Naive thymus-derived CD4-positive, alpha-beta T cell (primary cell): ENCODE measurements at regions of chr9 and their contacts with region 1.

Region 1: DNA sequence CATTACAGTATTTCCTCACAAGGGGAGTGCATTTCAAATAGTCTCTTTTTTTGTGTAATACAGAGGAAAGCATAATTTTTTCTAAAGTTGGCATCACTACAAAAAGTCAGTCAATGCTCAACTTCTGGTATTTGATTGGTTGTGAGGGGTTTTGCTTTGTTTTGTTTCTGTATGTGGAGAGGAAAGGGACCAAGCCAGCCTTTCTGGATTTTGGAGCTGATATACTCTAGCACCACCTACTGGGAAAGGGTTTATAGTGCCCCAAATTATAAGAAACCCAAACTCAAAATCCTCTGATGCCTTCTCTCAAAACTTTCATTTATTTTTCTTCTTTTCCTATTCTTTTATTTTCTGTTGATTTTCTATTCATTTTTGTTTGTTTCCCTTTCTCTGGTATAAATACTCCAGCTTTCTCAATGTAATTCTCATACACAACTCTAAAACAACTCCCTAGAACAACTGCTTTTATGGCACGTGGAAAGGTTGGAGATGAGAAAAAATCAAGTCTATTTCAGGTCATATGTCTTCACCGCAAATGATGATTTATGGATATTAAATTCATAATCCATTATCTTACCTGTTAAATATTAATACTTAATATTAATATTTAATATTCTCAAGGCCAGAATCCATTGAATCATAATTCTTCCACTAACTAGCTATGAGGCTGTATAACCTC is 69.5 kb upstream of the ANXA1 start:
- DNase-seq: peak in 4 of 9 donors; percentile 8 to 20 (median 15)
- ATAC-seq: peak; percentile 57
- H3K4me3 ChIP-seq: no peak overlapping the region
- H3K4me3 Mint-ChIP-seq: no peak overlapping the region
- H3K27ac ChIP-seq: no peak overlapping the region
- H3K27ac Mint-ChIP-seq: no peak overlapping the region
- H3K4me1 ChIP-seq: no peaks in the 10 kb centered on the region
- H3K4me1 Mint-ChIP-seq: no peaks in the 10 kb centered on the region
- H3K27me3 ChIP-seq: no peaks in the 10 kb centered on the region
- H3K27me3 Mint-ChIP-seq: peaks cover 8 to 31% (median 18%) of the 10 kb centered on the region in 5 donors

Region 2: GRCh38 chr9:72038890-72039410 is 1043.2 kb before region 1 on chr9:
- CTCF ChIA-PET with region 1: no interaction called
- POLR2A ChIA-PET with region 1: no interaction called
- intact Hi-C with region 1: loop called in 1 of 2 experiments (anchors 1 kb)
- DNase-seq: peak; percentile 15 to 59 (median 41)
- ATAC-seq: peak; percentile 76
- H3K4me3 ChIP-seq: no peak overlapping the region
- H3K4me3 Mint-ChIP-seq: peak overlapping the region in 1 of 10 donors; percentile 66
- H3K27ac ChIP-seq: no peak overlapping the region
- H3K27ac Mint-ChIP-seq: no peak overlapping the region
- H3K4me1 ChIP-seq: peaks cover 0 to 3% of the 10 kb centered on the region in 2 donors
- H3K4me1 Mint-ChIP-seq: peaks cover 0 to 7% (median 4%) of the 10 kb centered on the region in 7 donors
- H3K27me3 ChIP-seq: no peaks in the 10 kb centered on the region
- H3K27me3 Mint-ChIP-seq: peaks cover 4 to 22% (median 6%) of the 10 kb centered on the region in 5 donors

Region 3: GRCh38 chr9:72834994-72835393 is 247.1 kb before region 1 on chr9:
- CTCF ChIA-PET with region 1: no interaction called
- POLR2A ChIA-PET with region 1: no interaction called
- intact Hi-C with region 1: no loop called
- DNase-seq: no peak
- ATAC-seq: no peak
- H3K4me3 ChIP-seq: no peak overlapping the region
- H3K4me3 Mint-ChIP-seq: no peak overlapping the region
- H3K27ac ChIP-seq: no peak overlapping the region
- H3K27ac Mint-ChIP-seq: no peak overlapping the region
- H3K4me1 ChIP-seq: no peaks in the 10 kb centered on the region
- H3K4me1 Mint-ChIP-seq: no peaks in the 10 kb centered on the region
- H3K27me3 ChIP-seq: no peaks in the 10 kb centered on the region
- H3K27me3 Mint-ChIP-seq: peaks cover 0 to 16% (median 15%) of the 10 kb centered on the region in 5 donors

Region 4: DNA sequence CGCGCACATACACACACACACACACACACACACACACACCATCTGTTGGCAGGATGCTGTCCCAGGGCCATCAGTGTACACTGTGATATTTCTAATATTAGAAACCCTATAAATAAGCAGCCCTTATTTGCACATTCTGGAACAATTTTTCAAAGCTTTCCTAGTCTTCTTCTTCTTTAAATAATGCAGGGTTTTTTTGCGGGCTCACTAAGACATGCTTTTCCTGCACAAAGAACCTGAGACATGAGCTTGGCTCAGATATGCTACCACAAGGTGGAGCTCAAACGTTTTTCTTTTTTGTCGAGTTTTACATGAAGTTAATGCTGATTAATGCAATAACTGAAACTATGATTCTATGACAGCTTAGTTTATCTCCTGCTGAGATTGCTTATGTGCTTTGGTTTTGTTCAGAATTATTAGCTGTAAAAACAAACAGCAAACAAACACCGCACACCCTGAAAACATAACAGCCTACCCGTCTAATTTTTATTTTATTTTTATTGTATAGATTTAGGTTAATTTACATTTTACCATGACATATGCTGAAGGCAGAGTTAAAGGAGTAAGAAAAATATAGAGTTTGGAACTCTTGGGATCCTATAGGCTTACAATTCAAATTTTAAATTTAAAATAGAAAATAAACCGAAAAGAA is 225.0 kb before region 1 on chr9:
- CTCF ChIA-PET with region 1: no interaction called
- POLR2A ChIA-PET with region 1: no interaction called
- intact Hi-C with region 1: loop called (anchors 5 kb)
- DNase-seq: peak in 1 of 9 donors; percentile 4
- ATAC-seq: peak; percentile 45
- H3K4me3 ChIP-seq: no peak overlapping the region
- H3K4me3 Mint-ChIP-seq: no peak overlapping the region
- H3K27ac ChIP-seq: no peak overlapping the region
- H3K27ac Mint-ChIP-seq: no peak overlapping the region
- H3K4me1 ChIP-seq: no peaks in the 10 kb centered on the region
- H3K4me1 Mint-ChIP-seq: peaks cover 0 to 5% (median 0%) of the 10 kb centered on the region in 7 donors
- H3K27me3 ChIP-seq: no peaks in the 10 kb centered on the region
- H3K27me3 Mint-ChIP-seq: peaks cover 0 to 5% (median 0%) of the 10 kb centered on the region in 5 donors

Region 5: DNA sequence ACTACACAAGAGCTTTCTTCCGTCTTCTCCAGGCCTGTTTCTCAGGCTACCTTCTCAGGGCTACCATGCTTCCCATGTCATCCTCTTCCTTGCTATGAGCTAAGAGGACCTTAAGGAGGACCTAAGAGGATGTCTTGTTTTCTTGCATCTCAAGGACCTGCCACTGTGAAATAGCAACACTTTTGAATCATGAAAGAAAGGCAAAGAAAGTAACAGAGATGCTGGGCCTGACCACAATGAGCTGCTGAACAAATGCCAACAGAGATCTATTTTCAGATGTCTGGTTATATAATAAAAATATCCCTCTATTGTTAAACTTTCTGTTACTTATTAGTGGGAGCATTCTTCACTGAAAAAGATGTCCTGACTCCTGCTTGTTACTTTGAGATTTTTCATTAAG is 32.8 kb after region 1 on chr9:
- CTCF ChIA-PET with region 1: no interaction called
- POLR2A ChIA-PET with region 1: no interaction called
- intact Hi-C with region 1: no loop called
- DNase-seq: no peak
- ATAC-seq: no peak
- H3K4me3 ChIP-seq: no peak overlapping the region
- H3K4me3 Mint-ChIP-seq: peak overlapping the region in 6 of 10 donors; percentile 22 to 71 (median 52)
- H3K27ac ChIP-seq: no peak overlapping the region
- H3K27ac Mint-ChIP-seq: peak overlapping the region in 6 of 9 donors; percentile 2 to 90 (median 28)
- H3K4me1 ChIP-seq: peaks cover 0 to 19% of the 10 kb centered on the region in 2 donors
- H3K4me1 Mint-ChIP-seq: peaks cover 19 to 48% (median 38%) of the 10 kb centered on the region in 7 donors
- H3K27me3 ChIP-seq: no peaks in the 10 kb centered on the region
- H3K27me3 Mint-ChIP-seq: no peaks in the 10 kb centered on the region